ENCODE measurements at regions of chr1 and their contacts with region 1.

Region 1: DNA sequence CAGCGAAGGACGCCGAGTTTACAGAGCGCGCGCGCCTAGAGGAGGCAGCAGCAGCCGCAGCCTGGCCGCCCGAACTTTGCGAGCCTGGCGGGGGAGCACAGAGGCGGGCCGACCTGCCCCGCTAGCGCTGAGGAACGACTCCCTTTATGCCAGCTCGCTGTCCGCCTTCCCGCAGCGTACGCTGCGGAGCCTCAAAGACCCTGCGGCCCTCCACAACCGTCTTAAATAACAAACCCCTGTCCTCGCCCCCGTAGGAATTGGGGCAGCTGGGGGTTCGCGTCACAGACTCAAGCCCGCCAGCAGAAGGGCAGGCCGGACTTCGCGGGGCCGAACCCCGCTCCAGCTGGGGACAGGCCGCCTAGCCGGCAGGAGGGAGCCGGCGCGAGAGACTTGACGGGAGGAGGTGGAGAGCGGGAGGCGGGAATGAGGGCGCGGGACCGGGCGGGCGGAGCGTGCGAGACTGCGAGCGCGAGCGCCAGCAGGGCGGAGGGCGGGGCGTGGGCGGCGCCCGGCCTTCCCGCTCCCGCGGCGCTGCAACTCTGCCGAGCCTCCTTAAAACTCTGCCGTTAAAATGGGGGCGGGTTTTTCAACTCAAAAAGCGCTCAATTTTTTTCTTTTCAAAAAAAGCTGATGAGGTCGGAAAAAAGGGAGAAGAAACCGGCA is 1.8 kb upstream of the CDKN2C start:
- DNase-seq: peak; percentile 88
- ATAC-seq: peak; percentile 83
- H3K4me3 Mint-ChIP-seq: peak overlapping the region; percentile 93
- H3K27ac Mint-ChIP-seq: peak overlapping the region; percentile 84
- H3K4me1 Mint-ChIP-seq: peaks cover 25% of the 10 kb centered on the region
- H3K27me3 Mint-ChIP-seq: peaks cover 4% of the 10 kb centered on the region

Region 2: GRCh38 chr1:50873458-50874187 is 94.7 kb before region 1 on chr1:
- CTCF ChIA-PET with region 1: interaction called, 3 read pairs
- POLR2A ChIA-PET with region 1: no interaction called
- intact Hi-C with region 1: loop called (anchors 5 to 10 kb)
- DNase-seq: peak; percentile 83
- ATAC-seq: peak; percentile 93
- H3K4me3 Mint-ChIP-seq: peak overlapping the region; percentile 42
- H3K27ac Mint-ChIP-seq: no peak overlapping the region
- H3K4me1 Mint-ChIP-seq: peaks cover 9% of the 10 kb centered on the region
- H3K27me3 Mint-ChIP-seq: no peaks in the 10 kb centered on the region

Region 3: GRCh38 chr1:50978144-50978851 is 10.0 kb after region 1 on chr1:
- CTCF ChIA-PET with region 1: interaction called, 21 read pairs
- POLR2A ChIA-PET with region 1: interaction called, 6 read pairs
- intact Hi-C with region 1: loop called in 1 of 2 experiments (anchors 1 kb)
- DNase-seq: peak; percentile 52
- ATAC-seq: peak; percentile 56
- H3K4me3 Mint-ChIP-seq: peak overlapping the region; percentile 68
- H3K27ac Mint-ChIP-seq: peak overlapping the region; percentile 7
- H3K4me1 Mint-ChIP-seq: peaks cover 18% of the 10 kb centered on the region
- H3K27me3 Mint-ChIP-seq: peaks cover 41% of the 10 kb centered on the region

Region 4: GRCh38 chr1:51235673-51236530 is 267.6 kb after region 1 on chr1 and contains the start of gene RNF11:
- CTCF ChIA-PET with region 1: no interaction called
- POLR2A ChIA-PET with region 1: no interaction called
- intact Hi-C with region 1: loop called (anchors 2 to 5 kb)
- DNase-seq: peak; percentile 97
- ATAC-seq: peak; percentile 93
- H3K4me3 Mint-ChIP-seq: peak within 1 kb of the TSS; percentile 79
- H3K27ac Mint-ChIP-seq: peak within 1 kb of the TSS; percentile 90
- H3K4me1 Mint-ChIP-seq: peaks cover 29% of the 10 kb centered on the region
- H3K27me3 Mint-ChIP-seq: no peaks in the 10 kb centered on the region
- total RNA-seq, gene RNF11: 20.6 to 26.0 TPM

Region 5: GRCh38 chr1:51616901-51617708 is 648.8 kb after region 1 on chr1 and contains the start of gene OSBPL9:
- CTCF ChIA-PET with region 1: no interaction called
- POLR2A ChIA-PET with region 1: no interaction called
- intact Hi-C with region 1: loop called in 1 of 2 experiments (anchors 5 kb)
- DNase-seq: peak; percentile 95
- ATAC-seq: peak; percentile 95
- H3K4me3 Mint-ChIP-seq: peak within 1 kb of the TSS; percentile 100
- H3K27ac Mint-ChIP-seq: peak within 1 kb of the TSS; percentile 96
- H3K4me1 Mint-ChIP-seq: peaks cover 33% of the 10 kb centered on the region
- H3K27me3 Mint-ChIP-seq: no peaks in the 10 kb centered on the region
- total RNA-seq, gene OSBPL9: 46.2 to 64.5 TPM

Region 6: DNA sequence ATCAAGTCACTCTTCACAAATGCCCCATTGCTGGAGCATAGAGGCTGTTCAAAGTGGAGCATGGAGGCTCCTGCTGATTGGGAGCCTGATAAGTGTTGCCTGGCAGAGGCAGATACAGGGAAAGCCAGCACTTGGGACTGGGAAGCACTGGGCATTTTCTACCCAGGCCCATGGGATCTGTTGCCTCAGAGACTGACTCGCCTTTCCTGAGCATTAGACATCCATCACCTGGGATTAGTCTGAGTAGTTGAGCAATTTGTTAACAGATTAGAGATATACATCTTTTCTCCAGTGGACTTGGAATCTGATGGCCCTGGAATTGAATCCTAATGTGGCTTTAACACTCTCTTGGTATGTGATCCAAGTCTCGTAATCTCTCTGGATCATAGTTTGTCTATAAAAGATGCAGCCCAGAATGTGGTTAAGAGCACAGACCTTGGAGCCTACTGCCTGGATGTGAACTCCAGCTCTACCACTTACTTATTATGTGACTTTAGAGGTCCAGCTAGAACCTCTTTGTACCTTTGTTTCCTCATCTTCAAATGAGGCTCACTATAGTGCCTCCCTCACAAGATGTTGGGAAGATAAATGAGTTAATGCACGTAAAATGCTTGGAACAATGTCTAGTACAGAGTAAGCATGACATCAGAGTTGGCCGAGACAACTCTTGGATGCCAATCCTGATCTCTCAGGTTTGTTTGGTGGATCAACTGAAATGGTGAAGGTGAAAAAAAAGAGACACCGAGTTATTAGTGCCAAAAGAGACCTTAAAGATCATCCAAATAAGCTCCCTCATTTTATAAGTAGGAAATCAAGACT is 948.5 kb after region 1 on chr1:
- CTCF ChIA-PET with region 1: no interaction called
- POLR2A ChIA-PET with region 1: no interaction called
- intact Hi-C with region 1: no loop called
- DNase-seq: no peak
- ATAC-seq: no peak
- H3K4me3 Mint-ChIP-seq: no peak overlapping the region
- H3K27ac Mint-ChIP-seq: no peak overlapping the region
- H3K4me1 Mint-ChIP-seq: peaks cover 2% of the 10 kb centered on the region
- H3K27me3 Mint-ChIP-seq: peaks cover 9% of the 10 kb centered on the region

Region 7: DNA sequence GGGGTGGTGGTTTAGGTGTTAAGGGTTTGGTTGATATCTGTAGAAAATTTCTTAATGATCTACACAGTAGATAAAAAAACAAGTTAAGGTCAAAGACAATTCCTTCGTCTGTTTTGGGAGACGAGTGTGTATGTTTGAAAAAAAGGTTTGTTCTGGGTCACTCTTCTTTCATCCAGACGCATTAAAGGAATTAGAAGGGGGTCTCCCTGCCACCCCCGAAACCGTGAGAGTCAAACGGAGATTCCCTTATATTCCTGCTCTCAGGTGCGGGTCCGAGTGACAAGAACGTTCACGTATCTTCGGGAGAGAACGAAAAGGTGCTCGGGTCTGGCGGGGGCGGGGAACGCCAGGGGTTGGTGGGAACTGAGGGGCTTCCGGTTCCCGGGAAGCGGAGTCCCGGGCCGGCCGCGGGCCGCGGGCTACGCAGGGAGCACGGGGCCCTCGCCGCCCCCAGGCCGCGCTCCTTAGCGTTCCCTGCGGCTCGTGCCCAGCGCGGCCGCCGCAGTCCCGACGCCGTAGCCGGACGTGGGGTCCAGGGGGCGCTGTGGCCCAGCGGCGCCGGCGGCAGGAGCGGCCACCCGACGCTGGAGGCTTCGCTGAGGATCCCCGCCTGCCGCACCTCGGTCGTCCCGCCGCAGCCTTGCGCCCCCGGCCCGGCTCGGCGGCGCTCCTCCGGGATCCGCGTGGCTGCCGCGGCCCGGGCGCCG is 1173.4 kb after region 1 on chr1 and contains the start of gene ZFYVE9:
- CTCF ChIA-PET with region 1: no interaction called
- POLR2A ChIA-PET with region 1: no interaction called
- intact Hi-C with region 1: loop called in 1 of 2 experiments (anchors 5 kb)
- DNase-seq: peak; percentile 83
- ATAC-seq: peak; percentile 62
- H3K4me3 Mint-ChIP-seq: peak within 1 kb of the TSS; percentile 80
- H3K27ac Mint-ChIP-seq: peak within 1 kb of the TSS; percentile 84
- H3K4me1 Mint-ChIP-seq: peaks cover 43% of the 10 kb centered on the region
- H3K27me3 Mint-ChIP-seq: peaks cover 9% of the 10 kb centered on the region
- total RNA-seq, gene ZFYVE9: 4.3 to 4.7 TPM